ENCODE measurements at regions of chr17 and their contacts with region 1.

Region 1: GRCh38 chr17:78865682-78866390 is 25.2 kb upstream of the USP36 start:
- DNase-seq: peak; percentile 89
- H3K4me3 ChIP-seq: no peak overlapping the region
- H3K27ac ChIP-seq: no peak overlapping the region
- H3K4me1 ChIP-seq: peaks cover 22% of the 10 kb centered on the region
- H3K27me3 ChIP-seq: no peaks in the 10 kb centered on the region
- CTCF ChIP-seq: peak; percentile 92 to 93
- POLR2A ChIP-seq: no peak

Region 2: DNA sequence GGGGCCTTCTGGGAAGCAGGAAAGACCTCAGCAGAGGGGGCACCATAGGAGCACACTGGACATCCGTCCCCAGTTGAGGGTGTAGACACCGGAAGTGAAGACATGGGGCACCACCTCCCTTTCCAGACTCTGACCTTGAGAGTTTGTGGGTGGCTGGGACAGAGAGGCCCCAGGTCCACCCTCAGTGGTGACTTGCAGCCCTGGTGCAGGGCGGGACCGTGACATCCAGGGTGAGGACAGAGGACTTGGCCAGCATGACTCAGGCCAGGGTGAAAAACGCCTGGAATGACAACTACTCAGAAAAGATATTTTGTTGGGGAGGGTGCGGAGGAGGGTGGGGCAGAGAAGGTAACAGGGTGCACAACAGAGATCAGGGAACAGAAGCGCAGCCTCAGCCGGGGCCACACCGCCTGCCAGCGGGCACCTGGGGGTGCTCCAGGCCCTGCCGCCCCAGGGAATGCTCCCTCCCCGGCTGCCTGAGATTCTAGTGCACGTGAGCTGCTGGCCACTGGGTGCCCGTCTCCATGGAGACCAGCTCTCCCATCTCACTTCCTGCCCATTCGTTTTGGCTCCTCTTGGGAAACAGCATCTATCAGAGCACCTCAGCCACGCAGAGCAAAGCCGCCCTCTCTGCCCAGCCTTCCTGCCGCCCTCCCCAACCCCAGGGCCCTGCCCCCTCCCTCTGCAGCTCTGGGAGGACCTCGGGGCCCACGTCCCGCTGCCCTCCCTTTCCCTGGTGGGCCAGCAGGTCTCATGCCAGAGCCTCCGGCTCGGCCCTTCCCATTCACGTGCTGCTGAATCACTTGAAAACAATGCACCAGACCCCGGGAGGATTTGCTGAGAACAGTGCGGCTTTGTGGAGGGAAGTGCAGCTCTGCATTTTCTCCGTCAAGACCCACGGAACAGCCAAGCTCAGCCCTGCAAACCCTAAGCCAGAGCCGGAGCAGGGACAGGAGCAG is 17.6 kb after region 1 on chr17:
- CTCF ChIA-PET with region 1: interaction called, 41 read pairs
- POLR2A ChIA-PET with region 1: no interaction called
- dilution Hi-C with region 1: no loop called
- intact Hi-C with region 1: loop called (anchors 2 kb)
- DNase-seq: peak; percentile 97
- H3K4me3 ChIP-seq: no peak overlapping the region
- H3K27ac ChIP-seq: peak overlapping the region; percentile 85
- H3K4me1 ChIP-seq: peaks cover 42% of the 10 kb centered on the region
- H3K27me3 ChIP-seq: no peaks in the 10 kb centered on the region
- CTCF ChIP-seq: no peak
- POLR2A ChIP-seq: no peak

Region 3: DNA sequence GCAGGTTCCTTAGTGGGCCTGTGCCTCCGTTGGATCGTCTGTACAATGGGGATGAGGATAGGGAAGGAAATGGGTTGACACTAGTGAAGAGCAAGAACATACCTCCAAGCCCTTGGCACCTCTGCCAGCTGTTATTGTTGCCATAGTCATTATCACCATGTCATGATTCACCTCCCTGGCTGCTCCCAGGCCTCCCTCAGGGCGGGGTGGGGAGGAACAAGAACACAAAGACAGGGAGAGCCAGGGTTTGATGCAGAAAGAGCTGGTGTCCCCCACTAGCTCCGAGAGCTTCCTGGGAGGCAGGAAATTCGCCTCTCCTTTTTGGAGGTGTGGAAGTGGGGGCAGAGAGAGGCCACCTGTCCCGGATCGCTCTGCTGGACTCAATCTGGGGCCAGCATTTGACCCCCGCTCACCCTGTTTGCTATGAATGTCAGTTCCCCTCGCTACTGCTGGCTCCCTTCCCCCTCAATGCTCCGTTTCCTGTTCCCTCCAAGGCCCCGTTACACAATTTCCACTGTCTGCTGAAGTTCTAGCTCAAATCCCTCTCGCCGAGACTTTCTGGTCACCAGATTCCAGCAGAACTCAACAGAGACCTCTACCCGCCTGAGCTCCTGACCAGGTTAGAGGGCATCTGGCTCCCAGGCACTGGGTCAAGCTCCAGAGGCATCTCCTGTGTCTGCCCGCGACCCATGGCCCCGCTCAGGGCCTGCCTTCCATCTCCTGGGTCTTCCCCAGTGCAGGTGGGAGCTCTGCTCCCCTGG is 50.2 kb after region 1 on chr17:
- CTCF ChIA-PET with region 1: interaction called, 26 read pairs
- POLR2A ChIA-PET with region 1: no interaction called
- dilution Hi-C with region 1: no loop called
- intact Hi-C with region 1: no loop called
- DNase-seq: peak; percentile 46
- H3K4me3 ChIP-seq: peak overlapping the region in 1 of 3 experiments; percentile 15
- H3K27ac ChIP-seq: peak overlapping the region; percentile 54
- H3K4me1 ChIP-seq: peaks cover 12% of the 10 kb centered on the region
- H3K27me3 ChIP-seq: no peaks in the 10 kb centered on the region
- CTCF ChIP-seq: no peak
- POLR2A ChIP-seq: no peak

Region 4: DNA sequence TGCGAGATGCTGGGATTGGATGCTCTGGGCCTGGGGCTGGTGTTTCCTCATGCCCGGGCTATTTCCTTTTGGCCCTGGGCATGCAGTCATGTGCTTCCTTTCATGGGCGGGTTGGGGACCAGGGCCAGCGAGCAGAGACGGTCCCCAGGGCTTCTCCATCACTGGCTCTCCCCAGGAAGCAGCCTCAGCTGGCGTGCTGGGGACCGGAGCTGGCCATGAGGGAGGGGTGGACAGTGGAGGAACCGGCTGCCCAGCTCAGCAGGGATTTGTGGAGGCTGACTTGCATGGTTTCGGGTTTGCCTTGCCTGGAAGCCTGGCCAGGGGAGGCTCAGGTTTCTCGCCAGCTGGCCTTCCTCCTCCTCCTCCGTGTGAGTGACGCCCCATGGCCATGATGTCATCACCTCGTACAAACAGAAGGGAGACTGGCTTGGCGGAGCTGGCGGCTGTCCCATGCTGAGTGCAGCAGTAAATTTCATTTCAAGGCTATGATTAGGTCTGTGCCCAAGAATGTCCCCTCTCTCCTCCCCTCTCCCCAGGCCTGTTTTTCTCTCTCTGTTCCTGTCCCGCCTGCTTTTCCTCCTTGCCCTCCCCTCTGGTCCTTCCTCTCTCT is 68.2 kb after region 1 on chr17:
- CTCF ChIA-PET with region 1: interaction called, 13 read pairs
- POLR2A ChIA-PET with region 1: interaction called, 4 read pairs
- dilution Hi-C with region 1: no loop called
- intact Hi-C with region 1: loop called (anchors 1 kb)
- DNase-seq: peak; percentile 96
- H3K4me3 ChIP-seq: peak overlapping the region in 2 of 3 experiments; percentile 16 to 25
- H3K27ac ChIP-seq: peak overlapping the region; percentile 93
- H3K4me1 ChIP-seq: peaks cover 30% of the 10 kb centered on the region
- H3K27me3 ChIP-seq: no peaks in the 10 kb centered on the region
- CTCF ChIP-seq: no peak
- POLR2A ChIP-seq: peak; percentile 55

Region 5: GRCh38 chr17:79000396-79001189 is 134.8 kb after region 1 on chr17:
- CTCF ChIA-PET with region 1: no interaction called
- POLR2A ChIA-PET with region 1: no interaction called
- dilution Hi-C with region 1: no loop called
- intact Hi-C with region 1: no loop called
- DNase-seq: no peak
- H3K4me3 ChIP-seq: no peak overlapping the region
- H3K27ac ChIP-seq: no peak overlapping the region
- H3K4me1 ChIP-seq: peaks cover 5% of the 10 kb centered on the region
- H3K27me3 ChIP-seq: no peaks in the 10 kb centered on the region
- CTCF ChIP-seq: no peak
- POLR2A ChIP-seq: no peak

Measured in endothelial cell of umbilical vein (primary cell).